Ascending aorta (tissue), 2 donors: ENCODE measurements at regions of chr15 and their contacts with region 1.

Region 1: GRCh38 chr15:40564591-40565332 is at the start of gene CCDC32:
- DNase-seq: peak; percentile 98 to 99
- H3K4me3 ChIP-seq: peak within 1 kb of the TSS; percentile 78 to 82
- H3K27ac ChIP-seq: peak within 1 kb of the TSS; percentile 96 to 97
- H3K4me1 ChIP-seq: peaks cover 0 to 14% of the 10 kb centered on the region in 2 donors
- H3K27me3 ChIP-seq: no peaks in the 10 kb centered on the region
- CTCF ChIP-seq: no peak
- total RNA-seq, gene CCDC32: 16.4 TPM

Region 2: DNA sequence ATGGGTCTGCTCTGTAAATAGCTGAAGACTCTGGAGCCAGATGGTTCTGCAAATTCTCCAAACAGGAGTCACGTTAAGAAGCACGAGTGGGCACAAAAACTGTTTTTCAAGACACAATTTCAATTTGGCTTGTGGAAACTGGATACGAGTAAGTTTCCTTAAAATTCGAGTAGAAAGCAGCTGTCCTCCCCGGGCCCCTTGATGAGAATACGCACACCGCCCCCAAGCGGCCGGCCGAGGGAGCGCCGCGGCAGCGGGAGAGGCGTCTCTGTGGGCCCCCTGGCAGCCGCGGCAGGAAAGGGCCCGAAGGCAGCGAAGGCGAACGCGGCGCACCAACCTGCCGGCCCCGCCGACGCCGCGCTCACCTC is 984.7 kb before region 1 on chr15:
- intact Hi-C with region 1: no loop called
- DNase-seq: peak; percentile 76 to 95
- H3K4me3 ChIP-seq: peak overlapping the region; percentile 52 to 66
- H3K27ac ChIP-seq: peak overlapping the region; percentile 83 to 92
- H3K4me1 ChIP-seq: no peaks in the 10 kb centered on the region
- H3K27me3 ChIP-seq: no peaks in the 10 kb centered on the region
- CTCF ChIP-seq: peak; percentile 82 to 98 (median 95)

Region 3: DNA sequence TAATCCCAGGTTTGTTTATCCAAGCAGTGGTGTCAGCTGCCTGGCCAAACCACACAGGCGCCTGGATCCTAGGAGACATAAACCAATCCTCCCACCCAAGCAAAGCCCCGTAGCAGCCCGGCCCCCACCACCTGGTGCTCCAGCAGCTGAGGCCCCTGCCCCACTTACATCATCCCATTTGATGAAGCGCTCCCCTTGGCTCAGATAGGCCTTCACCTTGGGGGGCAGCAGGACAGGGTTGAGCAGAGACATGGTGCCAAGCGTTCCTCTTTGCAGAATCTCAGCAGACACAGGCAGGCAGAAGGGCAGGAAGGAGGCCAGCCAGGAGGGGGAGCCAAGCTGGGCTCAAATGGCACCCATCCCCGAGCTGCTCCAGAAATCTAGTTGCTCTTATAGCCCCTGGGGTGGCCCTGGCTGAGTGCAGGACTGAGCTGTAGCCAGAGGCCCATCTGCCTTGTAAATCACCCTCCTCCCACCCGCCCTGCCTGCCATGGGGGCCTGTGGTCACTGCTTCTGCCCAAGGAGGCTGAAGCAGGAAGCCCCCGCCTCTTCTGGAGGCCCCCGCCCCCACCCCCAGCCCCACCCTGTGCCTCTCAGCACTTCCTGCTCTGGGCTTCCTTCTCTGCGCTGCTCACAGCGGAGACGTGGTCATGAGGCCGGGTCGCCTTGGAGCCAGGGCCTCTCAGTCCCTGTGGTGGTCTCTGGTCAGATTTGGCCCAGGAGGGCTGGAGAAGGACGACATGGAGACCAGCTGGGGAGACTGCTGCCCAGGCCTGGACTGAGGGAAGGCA is 257.1 kb before region 1 on chr15 and contains the start of gene PLCB2:
- intact Hi-C with region 1: no loop called
- DNase-seq: no peak
- H3K4me3 ChIP-seq: peak within 1 kb of the TSS in 1 of 2 donors; percentile 48
- H3K27ac ChIP-seq: peak within 1 kb of the TSS in 1 of 2 donors; percentile 26
- H3K4me1 ChIP-seq: no peaks in the 10 kb centered on the region
- H3K27me3 ChIP-seq: no peaks in the 10 kb centered on the region
- CTCF ChIP-seq: no peak
- total RNA-seq, gene PLCB2: 6.9 TPM

Region 4: GRCh38 chr15:40344631-40345120 is 220.1 kb before region 1 on chr15:
- intact Hi-C with region 1: loop called (anchors 5 kb)
- DNase-seq: no peak
- H3K4me3 ChIP-seq: no peak overlapping the region
- H3K27ac ChIP-seq: peak overlapping the region; percentile 98 to 99
- H3K4me1 ChIP-seq: peaks cover 20 to 45% of the 10 kb centered on the region in 2 donors
- H3K27me3 ChIP-seq: no peaks in the 10 kb centered on the region
- CTCF ChIP-seq: peak; percentile 69 to 87 (median 80)

Region 5: GRCh38 chr15:40382580-40383456 is 181.9 kb before region 1 on chr15 and contains the start of gene KNSTRN:
- intact Hi-C with region 1: no loop called
- DNase-seq: peak; percentile 69 to 96
- H3K4me3 ChIP-seq: peak within 1 kb of the TSS; percentile 78 to 96
- H3K27ac ChIP-seq: no peak within 1 kb of the TSS
- H3K4me1 ChIP-seq: peaks cover 0 to 14% of the 10 kb centered on the region in 2 donors
- H3K27me3 ChIP-seq: no peaks in the 10 kb centered on the region
- CTCF ChIP-seq: no peak
- total RNA-seq, gene KNSTRN: 5.1 TPM

Region 6: DNA sequence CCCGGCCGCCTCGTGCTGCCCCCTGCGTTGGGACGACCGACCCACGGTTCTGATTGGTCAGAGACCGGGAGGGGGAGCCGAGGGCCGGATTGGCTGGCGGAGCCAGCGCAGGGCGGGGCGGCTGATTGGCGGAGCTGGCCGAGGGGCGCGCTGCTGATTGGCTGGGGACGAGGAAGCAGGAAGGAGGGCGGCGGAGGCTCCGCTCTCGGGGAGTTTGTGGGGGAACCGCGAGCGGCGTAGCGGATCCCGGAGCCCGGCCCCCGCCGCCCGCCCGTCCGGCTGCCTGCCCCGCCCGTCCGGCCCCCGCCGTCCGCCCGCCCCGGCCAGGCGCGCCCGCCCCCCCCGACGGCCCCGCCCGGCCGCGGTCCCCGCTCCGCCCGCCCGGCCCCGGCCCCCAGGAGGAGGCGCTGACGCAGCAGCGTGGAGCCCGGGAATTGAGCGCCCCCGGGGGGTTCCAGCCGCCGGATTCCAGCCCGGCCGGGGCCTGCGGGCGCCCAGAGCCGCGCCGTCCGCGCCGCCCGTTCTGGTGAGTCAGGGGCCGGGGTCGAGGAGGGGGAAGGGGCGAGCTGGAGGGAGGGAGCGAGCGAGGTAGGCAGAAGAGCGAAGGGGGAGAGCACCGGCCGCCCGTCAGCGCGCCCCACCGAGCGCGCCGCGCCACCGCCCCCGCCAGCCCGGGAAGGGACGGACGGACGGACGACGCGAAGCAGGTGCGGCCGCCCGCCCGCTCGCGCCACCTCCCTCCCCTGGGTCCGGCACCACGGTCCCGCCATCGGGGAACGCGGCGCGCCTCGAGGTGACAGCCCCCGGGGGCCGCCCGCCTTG is 123.8 kb before region 1 on chr15 and contains the start of gene BAHD1:
- intact Hi-C with region 1: loop called (anchors 2 kb)
- DNase-seq: peak; percentile 85 to 97
- H3K4me3 ChIP-seq: peak within 1 kb of the TSS; percentile 95 to 97
- H3K27ac ChIP-seq: peak within 1 kb of the TSS; percentile 31 to 75
- H3K4me1 ChIP-seq: peaks cover 12 to 33% of the 10 kb centered on the region in 2 donors
- H3K27me3 ChIP-seq: peaks cover 11% of the 10 kb centered on the region
- CTCF ChIP-seq: peak in 1 of 3 experiments; percentile 28
- total RNA-seq, gene BAHD1: 10.6 TPM

Region 7: DNA sequence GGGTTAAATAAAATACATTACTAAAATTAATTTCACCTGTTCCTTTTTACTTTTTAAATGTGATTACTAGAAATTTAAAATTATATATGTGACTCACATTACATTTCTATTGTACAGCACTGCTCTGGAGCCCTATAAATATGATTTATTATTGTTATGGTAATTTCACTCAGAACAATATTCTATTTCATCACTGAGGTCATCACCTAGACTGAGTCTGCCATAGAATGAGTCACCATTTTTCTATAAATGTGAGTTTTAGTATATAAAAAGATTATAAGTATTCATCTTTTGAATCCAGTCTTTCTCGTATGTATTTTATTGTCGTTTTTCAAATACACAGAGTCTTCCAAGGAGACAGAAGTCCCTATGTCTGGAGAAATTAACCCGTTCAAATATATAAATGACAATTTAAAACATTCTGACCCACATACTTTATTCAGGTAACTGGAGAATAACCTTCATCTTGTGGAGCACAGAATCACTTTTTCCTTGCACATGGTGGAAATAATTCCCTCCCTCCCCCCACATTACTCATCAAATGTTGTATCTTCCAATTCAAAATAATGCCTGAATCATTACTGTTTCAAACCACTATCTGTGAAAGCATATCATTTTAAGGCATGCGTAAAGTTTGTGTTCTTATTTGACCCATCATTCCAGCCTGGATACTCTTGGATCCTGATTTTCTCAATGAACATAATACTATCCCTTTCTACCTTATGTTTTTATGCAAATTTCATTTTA is 64.0 kb before region 1 on chr15:
- intact Hi-C with region 1: no loop called
- DNase-seq: no peak
- H3K4me3 ChIP-seq: no peak overlapping the region
- H3K27ac ChIP-seq: no peak overlapping the region
- H3K4me1 ChIP-seq: no peaks in the 10 kb centered on the region
- H3K27me3 ChIP-seq: no peaks in the 10 kb centered on the region
- CTCF ChIP-seq: no peak

Region 8: DNA sequence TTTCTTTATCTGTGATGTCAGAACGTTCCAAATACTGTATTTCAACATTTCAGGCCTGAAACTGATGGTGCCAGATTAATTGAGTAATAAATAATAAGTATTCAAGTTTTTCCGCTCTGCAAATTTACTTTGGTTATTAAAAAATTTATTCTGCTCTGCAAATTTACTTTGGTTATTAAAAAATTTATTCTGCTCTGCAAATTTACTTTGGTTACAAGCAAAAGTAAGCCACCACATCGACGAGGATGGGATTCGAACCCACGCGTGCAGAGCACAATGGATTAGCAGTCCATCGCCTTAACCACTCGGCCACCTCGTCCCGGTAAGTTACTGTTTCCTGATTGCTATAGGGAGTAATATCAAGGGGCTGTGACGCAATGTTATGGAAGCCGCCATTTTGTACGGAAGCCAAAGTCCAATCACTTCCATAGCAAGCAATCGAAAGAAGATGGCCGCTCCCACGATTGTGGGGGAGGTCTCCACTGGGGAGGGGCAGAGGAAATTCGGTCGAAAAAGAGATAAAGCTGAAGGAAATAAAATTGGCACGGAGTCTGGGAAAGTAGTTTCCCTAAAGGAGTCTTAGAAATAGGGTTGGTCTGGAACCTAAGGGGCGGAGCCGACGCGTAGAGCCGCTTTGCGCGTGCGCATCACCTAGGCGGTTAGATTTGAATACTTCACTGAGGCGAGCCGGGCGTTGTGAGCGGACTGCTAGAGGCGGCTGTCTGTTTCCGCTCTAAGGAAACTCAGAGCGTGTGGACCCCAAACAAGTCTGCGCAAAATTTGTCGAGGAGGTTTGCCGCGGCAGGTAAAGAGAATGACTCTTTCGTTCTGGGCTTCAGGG is 29.0 kb after region 1 on chr15 and contains the start of gene KNL1:
- intact Hi-C with region 1: loop called (anchors 1 kb)
- DNase-seq: peak; percentile 72 to 96
- H3K4me3 ChIP-seq: peak within 1 kb of the TSS; percentile 50 to 73
- H3K27ac ChIP-seq: peak within 1 kb of the TSS; percentile 78 to 87
- H3K4me1 ChIP-seq: peaks cover 0 to 9% of the 10 kb centered on the region in 2 donors
- H3K27me3 ChIP-seq: no peaks in the 10 kb centered on the region
- CTCF ChIP-seq: no peak
- total RNA-seq, gene KNL1: not detected

Region 9: DNA sequence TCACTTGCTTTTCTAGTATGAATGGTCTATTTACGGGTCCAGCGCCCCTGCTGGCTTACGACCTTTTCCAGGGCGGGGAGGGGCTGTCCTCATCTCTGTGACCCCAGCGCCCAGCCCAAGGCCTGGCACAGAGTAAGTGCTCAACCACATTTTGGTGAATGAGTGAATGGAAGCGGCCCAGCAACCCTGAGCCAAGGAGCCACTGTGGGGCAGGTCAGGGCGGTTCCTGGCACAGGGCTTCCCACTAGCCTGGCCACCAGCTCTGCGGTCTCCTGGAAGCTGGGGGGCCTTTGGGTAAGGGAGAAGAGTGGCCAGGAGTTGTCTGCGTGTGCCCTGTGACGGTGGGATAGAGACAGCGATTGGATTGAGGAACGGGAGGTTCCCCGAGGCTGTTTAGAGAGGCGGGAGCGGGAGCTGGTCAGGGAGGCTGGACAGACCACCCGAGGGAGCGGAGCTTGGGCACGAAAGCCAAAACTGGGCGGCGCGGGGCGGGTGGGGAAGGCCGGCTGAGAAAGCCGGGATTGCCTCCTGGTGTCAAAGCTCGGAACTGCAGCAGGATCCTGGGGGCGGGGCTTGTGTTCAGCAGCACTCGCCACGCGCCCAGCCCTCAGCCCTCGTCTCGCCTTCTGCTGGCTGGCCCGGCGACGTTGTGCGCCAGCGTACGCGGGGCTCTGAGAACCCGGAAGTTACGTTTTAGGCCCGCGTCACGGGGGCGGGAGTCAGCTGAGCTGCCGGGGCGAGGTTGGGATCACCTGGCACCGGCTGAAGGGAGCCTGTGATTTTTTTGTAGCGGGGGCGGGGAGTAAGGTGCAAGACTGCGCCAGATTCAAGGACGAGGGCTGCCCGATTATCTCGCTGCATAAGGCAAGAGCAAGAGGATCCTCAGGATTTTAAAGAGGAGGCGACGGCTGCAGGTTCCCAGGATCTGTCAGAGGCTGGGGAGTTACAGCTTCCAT is 329.2 kb after region 1 on chr15 and contains the start of gene VPS18:
- intact Hi-C with region 1: loop called (anchors 1 kb)
- DNase-seq: peak; percentile 91 to 99
- H3K4me3 ChIP-seq: peak within 1 kb of the TSS; percentile 65 to 82
- H3K27ac ChIP-seq: peak within 1 kb of the TSS; percentile 85 to 89
- H3K4me1 ChIP-seq: peaks cover 0 to 13% of the 10 kb centered on the region in 2 donors
- H3K27me3 ChIP-seq: no peaks in the 10 kb centered on the region
- CTCF ChIP-seq: peak; percentile 98 to 99 (median 98)
- total RNA-seq, gene VPS18: 51.8 TPM

Region 10: GRCh38 chr15:41331833-41332787 is 767.3 kb after region 1 on chr15 and contains the start of gene OIP5:
- intact Hi-C with region 1: loop called (anchors 5 kb)
- DNase-seq: peak; percentile 96 to 99
- H3K4me3 ChIP-seq: peak within 1 kb of the TSS; percentile 89 to 91
- H3K27ac ChIP-seq: peak within 1 kb of the TSS in 1 of 2 donors; percentile 40
- H3K4me1 ChIP-seq: peaks cover 0 to 8% of the 10 kb centered on the region in 2 donors
- H3K27me3 ChIP-seq: no peaks in the 10 kb centered on the region
- CTCF ChIP-seq: peak; percentile 59 to 74 (median 67)
- total RNA-seq, gene OIP5: not detected